ENCODE measurements at regions of chr3 and their contacts with region 1.

Region 1: DNA sequence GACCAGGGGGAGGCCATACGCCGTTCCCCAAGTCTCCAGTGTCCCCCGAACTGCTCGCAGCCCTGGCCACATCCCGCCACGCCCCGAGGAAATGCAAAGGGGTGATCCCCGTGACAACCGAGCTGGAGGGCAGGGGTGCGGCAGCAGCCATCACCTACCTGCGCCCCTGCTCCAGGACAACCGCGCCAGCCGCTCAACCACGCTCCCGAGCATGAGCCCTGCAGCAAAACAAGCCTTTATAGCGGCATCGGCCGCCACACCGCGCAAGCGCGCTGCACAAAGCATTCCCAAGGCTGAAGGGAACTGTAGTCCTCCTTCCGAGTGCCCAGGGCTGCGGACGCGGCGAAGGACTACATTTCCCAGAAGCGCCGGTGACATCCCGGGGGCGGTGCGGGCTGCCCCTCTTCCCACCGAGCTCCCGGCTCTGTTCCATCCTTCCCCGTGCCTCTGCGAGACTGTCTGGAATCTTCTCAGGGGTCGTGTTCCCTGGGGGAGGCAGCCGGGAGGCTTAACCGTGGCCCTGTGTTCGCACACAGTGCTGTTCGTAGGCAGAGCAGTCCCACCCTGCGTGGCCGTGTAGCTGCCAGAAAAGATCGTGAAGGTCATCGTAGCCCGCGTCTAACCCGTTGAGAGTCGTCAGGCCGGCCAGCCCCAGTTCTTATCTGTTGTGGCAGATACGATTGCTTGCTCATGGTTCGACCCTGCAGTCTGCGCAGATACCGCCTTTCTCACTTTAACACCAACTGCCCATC is at the start of gene ABCC5:
- DNase-seq: peak; percentile 91
- ATAC-seq: peak; percentile 99
- H3K4me3 ChIP-seq: peak within 1 kb of the TSS; percentile 57
- H3K27ac ChIP-seq: peak within 1 kb of the TSS; percentile 82
- H3K4me1 ChIP-seq: peaks cover 7% of the 10 kb centered on the region
- H3K27me3 ChIP-seq: 0 out of 2 replicates have a peak, but pooled peaks cover 1% of the 10 kb centered on the region
- CTCF ChIP-seq: no peak
- POLR2A ChIP-seq: 0 out of 2 replicates have a peak, but pooled peaks have one; percentile 24
- RAD21 ChIP-seq: no peak
- total RNA-seq, gene ABCC5: 8.4 and 9.2 TPM in 2 replicates

Region 2: GRCh38 chr3:183988216-183988790 is 29.5 kb before region 1 on chr3:
- CTCF ChIA-PET with region 1: no interaction called
- POLR2A ChIA-PET with region 1: no interaction called
- dilution Hi-C with region 1: no loop called
- in situ Hi-C with region 1: no loop called
- intact Hi-C with region 1: loop called (anchors 2 kb)
- DNase-seq: peak; percentile 90
- ATAC-seq: peak; percentile 97
- H3K4me3 ChIP-seq: no peak overlapping the region
- H3K27ac ChIP-seq: peak overlapping the region; percentile 94; the same call in 1 of the 2 replicates
- H3K4me1 ChIP-seq: peaks cover 16% of the 10 kb centered on the region
- H3K27me3 ChIP-seq: no peaks in the 10 kb centered on the region
- CTCF ChIP-seq: no peak
- POLR2A ChIP-seq: no peak
- RAD21 ChIP-seq: no peak

Region 3: DNA sequence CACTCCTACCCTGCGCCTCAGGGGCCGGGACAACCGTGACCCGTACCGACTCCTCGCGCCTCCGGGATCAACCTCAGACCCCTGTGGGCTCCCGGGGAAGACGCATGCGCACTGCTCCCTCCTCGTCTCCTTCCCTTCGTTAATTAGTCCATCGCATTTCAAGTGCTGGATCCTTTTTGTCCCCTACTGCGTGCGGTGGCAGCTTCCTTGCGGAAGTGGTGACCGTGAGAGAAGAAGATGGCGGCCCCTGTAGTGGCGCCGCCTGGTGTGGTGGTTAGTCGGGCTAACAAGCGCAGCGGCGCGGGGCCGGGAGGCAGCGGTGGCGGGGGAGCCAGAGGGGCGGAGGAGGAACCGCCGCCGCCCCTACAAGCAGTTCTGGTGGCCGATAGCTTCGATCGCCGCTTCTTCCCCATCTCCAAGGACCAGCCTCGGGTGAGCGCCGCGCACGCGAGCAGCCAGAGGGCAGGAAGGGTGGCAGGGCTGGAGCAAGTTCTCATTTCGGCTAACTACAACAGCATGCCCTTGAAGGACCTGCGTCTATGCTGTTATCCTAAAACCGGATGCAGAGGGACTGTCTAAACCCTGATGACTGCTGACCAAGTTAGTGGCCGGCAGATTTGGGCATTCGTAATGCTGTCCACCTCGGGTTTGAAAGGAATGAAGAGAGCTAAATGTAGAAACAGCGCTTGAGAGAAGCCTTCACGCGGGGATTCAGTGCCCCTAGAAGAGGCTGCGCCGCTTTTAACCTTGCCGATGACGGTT is 117.5 kb after region 1 on chr3 and contains the start of gene EIF2B5:
- CTCF ChIA-PET with region 1: no interaction called
- POLR2A ChIA-PET with region 1: no interaction called
- dilution Hi-C with region 1: no loop called
- in situ Hi-C with region 1: no loop called
- intact Hi-C with region 1: loop called (anchors 1 kb)
- DNase-seq: peak; percentile 91
- ATAC-seq: peak; percentile 87
- H3K4me3 ChIP-seq: peak within 1 kb of the TSS; percentile 91
- H3K27ac ChIP-seq: peak within 1 kb of the TSS; percentile 87
- H3K4me1 ChIP-seq: no peaks in the 10 kb centered on the region; the same call in 1 of the 2 replicates
- H3K27me3 ChIP-seq: no peaks in the 10 kb centered on the region
- CTCF ChIP-seq: peak; percentile 47
- POLR2A ChIP-seq: peak; percentile 71
- RAD21 ChIP-seq: peak; percentile 33
- total RNA-seq, gene EIF2B5: 32.5 and 37.6 TPM in 2 replicates